Mammary epithelial cell (primary cell): ENCODE measurements at regions of chr15 and their contacts with region 1.

Region 1: GRCh38 chr15:62558640-62559380 is 393.7 kb upstream of the C2CD4B start:
- DNase-seq: no peak
- H3K4me3 ChIP-seq: no peak overlapping the region
- H3K27ac ChIP-seq: no peak overlapping the region
- H3K4me1 ChIP-seq: peaks cover 9% of the 10 kb centered on the region
- H3K27me3 ChIP-seq: no peaks in the 10 kb centered on the region
- CTCF ChIP-seq: no peak

Region 2: DNA sequence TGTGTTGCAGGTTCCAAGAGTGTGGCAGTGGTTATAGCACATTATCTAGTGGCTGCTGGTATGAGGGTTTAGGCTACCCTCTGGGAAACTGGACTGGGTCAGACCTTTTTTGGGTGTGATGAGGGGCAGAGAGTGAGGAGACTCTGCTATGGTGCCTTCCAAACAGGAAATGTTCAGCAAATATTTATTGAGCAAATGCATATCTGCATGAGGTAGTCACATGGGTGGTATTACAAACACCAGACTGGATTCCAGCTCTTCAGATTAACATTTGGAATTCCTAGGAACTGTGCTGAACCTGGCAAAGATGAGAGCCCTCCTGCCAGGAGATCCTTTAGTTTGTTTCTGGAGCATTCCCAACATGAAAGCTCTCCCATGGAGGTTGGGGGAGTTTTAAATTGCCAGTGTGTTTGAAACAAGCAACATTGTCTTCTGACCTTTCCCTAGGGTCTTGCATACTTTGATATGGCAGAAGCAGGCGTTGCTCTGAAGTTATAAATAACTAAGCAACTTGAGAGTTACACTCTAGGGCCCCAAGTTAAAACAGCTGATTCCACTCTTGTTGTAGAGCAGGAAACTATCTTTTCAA is 52.5 kb before region 1 on chr15:
- CTCF ChIA-PET with region 1: no interaction called
- dilution Hi-C with region 1: no loop called
- in situ Hi-C with region 1: no loop called
- intact Hi-C with region 1: no loop called
- DNase-seq: no peak
- H3K4me3 ChIP-seq: no peak overlapping the region
- H3K27ac ChIP-seq: no peak overlapping the region
- H3K4me1 ChIP-seq: no peaks in the 10 kb centered on the region
- H3K27me3 ChIP-seq: no peaks in the 10 kb centered on the region
- CTCF ChIP-seq: no peak

Region 3: GRCh38 chr15:62524848-62525247 is 34.0 kb before region 1 on chr15:
- CTCF ChIA-PET with region 1: no interaction called
- dilution Hi-C with region 1: loop called (anchors 5 kb)
- in situ Hi-C with region 1: no loop called
- intact Hi-C with region 1: no loop called
- DNase-seq: peak; percentile 20
- H3K4me3 ChIP-seq: no peak overlapping the region
- H3K27ac ChIP-seq: no peak overlapping the region
- H3K4me1 ChIP-seq: no peaks in the 10 kb centered on the region
- H3K27me3 ChIP-seq: no peaks in the 10 kb centered on the region
- CTCF ChIP-seq: no peak

Region 4: GRCh38 chr15:62599791-62600777 is 41.3 kb after region 1 on chr15:
- CTCF ChIA-PET with region 1: no interaction called
- dilution Hi-C with region 1: loop called (anchors 5 kb)
- in situ Hi-C with region 1: no loop called
- intact Hi-C with region 1: no loop called
- DNase-seq: no peak
- H3K4me3 ChIP-seq: no peak overlapping the region
- H3K27ac ChIP-seq: no peak overlapping the region
- H3K4me1 ChIP-seq: peaks cover 13% of the 10 kb centered on the region
- H3K27me3 ChIP-seq: no peaks in the 10 kb centered on the region
- CTCF ChIP-seq: no peak